Activated CD4-positive, alpha-beta T cell treated with anti-CD3 and anti-CD28 coated beads, Interleukin-2, amount 10 ng/mL, durations not matched to agents 24 days and 14 days (primary cell): ENCODE measurements at regions of chr17 and their contacts with region 1.

Region 1: DNA sequence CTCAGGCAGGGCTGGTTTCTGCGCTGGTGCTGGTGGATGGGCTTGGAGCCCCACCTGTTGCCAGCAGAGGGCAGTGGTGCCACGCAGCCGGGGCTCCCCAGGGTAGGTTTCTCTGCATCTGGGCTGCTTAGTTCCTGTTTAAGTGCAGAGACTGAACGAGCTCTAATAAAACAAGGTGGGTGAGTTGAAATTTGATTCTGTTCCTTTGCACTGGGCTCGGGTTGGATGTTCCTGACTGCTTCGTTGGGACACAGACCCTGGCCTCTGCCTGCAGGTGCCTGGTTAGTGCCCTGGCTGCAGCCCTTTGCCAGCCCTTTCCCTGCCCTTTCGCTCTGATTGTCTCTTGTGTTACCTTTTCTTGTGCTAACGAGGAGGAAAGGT is 30.0 kb downstream of the TBCD start:
- DNase-seq: peak; percentile 96
- H3K4me3 Mint-ChIP-seq: no peak overlapping the region
- H3K27ac Mint-ChIP-seq: no peak overlapping the region
- H3K4me1 Mint-ChIP-seq: peaks cover 9% of the 10 kb centered on the region
- H3K27me3 Mint-ChIP-seq: no peaks in the 10 kb centered on the region

Region 2: GRCh38 chr17:82767041-82767754 is 14.7 kb before region 1 on chr17:
- intact Hi-C with region 1: no loop called
- DNase-seq: peak; percentile 80
- H3K4me3 Mint-ChIP-seq: no peak overlapping the region
- H3K27ac Mint-ChIP-seq: no peak overlapping the region
- H3K4me1 Mint-ChIP-seq: peaks cover 15% of the 10 kb centered on the region
- H3K27me3 Mint-ChIP-seq: no peaks in the 10 kb centered on the region

Region 3: DNA sequence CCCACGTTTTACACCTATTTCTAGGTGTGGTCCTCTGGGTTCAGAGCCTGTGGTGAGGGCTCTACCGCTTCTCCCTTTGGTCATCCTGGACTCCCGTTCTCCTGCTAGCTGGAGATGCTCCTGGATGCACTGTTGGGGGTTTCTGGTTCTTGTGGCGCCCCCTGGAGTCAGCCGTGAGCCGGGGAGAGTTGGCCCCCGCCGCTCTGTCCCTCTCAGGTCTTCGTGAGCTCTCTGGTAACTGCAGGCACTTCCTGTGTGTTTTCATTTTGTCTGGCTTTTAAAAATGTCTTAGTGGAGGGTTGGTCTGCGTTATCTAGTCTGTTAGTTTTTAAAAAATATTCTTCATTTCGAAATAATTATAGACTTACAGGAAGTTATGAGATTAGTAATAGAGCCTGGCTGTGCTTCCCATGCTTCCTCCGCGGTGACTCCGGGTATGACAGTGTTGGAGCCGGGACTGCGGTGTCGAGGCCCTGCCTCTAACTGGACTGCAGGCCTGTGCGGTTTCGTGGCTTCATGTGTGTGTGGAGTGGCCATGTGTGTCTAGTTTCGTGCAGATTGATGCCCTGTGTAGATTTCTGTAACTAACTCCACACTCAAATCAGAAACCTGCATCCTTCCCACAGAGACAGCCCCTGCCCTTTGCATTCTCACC is 135.9 kb after region 1 on chr17:
- intact Hi-C with region 1: loop called (anchors 2 kb)
- DNase-seq: peak; percentile 69
- H3K4me3 Mint-ChIP-seq: no peak overlapping the region
- H3K27ac Mint-ChIP-seq: no peak overlapping the region
- H3K4me1 Mint-ChIP-seq: peaks cover 7% of the 10 kb centered on the region
- H3K27me3 Mint-ChIP-seq: no peaks in the 10 kb centered on the region